Activated T-helper 1 cell treated with anti-CD3 and anti-CD28 coated beads, Interleukin-12 subunit alpha, Interleukin-12 subunit beta, Interleukin-2, Interleukin-4 antibody, amounts not matched to agents 30 ng/mL and 10 ng/mL and 1 ng/mL, durations not matched to agents 14 hours and 24 hours and 36 hours (primary cell): ENCODE measurements at regions of chr5 and their contacts with region 1.

Region 1: GRCh38 chr5:32444431-32445286 is at the start of gene ZFR:
- DNase-seq: peak; percentile 94
- H3K4me3 Mint-ChIP-seq: peak within 1 kb of the TSS; percentile 97
- H3K27ac Mint-ChIP-seq: peak within 1 kb of the TSS; percentile 98
- H3K4me1 Mint-ChIP-seq: peaks cover 29% of the 10 kb centered on the region
- H3K27me3 Mint-ChIP-seq: peaks cover 12% of the 10 kb centered on the region
- total RNA-seq, gene ZFR: 67.7 and 70.8 TPM in 2 replicates

Region 2: DNA sequence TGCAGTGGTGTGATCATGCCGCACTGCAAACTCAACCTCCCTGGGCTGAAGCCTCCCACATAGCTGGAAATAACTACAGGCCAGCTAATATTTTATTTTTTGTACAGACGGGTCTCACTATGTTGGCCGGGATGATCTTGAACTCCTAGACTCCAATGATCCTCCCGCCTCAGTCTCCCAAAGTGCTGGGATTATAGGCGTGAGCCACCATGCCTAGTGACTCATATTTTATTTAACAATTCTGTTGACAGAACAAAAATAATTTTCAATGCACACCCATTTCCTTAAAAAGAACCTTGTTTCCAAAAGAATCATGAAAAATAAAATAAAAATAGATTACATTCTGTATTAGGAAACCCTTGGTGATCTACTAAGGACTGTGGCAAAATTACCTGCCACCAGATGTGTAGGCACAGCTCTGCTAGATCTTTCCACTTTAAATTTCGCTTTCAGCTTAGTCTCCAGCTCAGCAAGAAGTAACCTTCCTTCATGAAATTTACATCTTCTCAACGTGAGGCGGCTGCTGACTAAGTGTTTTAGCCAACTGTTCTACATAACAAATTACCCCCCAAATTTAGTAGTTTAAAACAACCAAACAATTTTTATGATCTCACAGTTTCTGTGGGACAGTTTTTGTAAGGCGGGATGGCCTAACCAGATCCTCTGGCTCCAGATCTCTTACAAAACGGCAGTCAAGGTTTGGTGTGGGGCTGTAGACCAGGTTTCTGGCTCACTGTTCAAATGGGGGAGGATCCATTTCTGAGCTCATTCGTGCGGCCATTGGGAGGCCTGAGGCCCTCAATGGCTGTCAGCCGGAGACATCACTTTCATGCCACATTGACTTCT is 237.9 kb before region 1 on chr5:
- intact Hi-C with region 1: loop called (anchors 2 kb)
- DNase-seq: no peak
- H3K4me3 Mint-ChIP-seq: no peak overlapping the region
- H3K27ac Mint-ChIP-seq: no peak overlapping the region
- H3K4me1 Mint-ChIP-seq: peaks cover 23% of the 10 kb centered on the region
- H3K27me3 Mint-ChIP-seq: peaks cover 2% of the 10 kb centered on the region

Region 3: DNA sequence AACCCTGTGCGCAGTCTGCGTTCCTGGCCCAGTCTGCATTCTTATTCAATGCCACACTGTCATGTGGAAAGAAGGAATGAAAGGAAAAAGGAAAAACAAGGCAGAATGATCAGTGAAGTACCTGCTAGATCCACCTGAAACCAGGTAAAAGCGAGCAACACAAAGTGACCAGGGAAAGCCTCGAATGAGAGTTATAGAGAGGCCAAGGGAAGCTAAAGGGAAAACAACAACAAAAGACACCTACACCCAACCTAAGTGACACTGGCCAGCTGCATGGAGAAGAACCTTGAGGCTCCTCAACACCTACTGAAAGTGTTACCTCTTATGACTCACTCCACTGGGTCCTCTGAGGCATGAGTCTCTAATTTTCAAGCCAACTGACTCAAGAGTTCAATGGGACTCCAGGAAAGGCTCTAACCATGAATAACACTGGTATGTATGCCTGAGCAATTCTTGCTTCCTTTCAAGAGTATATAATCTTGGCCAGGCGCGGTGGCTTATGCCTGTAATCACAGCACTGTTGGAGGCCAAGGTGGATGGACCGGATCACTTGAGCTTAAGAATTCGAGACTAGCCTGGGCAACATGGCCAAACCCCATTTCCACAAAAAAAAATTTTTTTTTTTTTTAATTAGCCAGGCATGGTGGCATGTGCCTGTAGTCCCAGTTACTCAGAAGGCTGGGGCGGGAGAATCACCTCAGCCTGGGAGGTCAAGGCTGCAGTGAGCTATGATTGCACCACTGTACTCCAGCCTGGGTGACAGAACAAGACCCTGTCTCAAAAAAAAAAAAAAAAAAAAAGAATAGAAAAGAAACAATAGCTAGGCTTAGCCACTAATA is 160.9 kb before region 1 on chr5:
- intact Hi-C with region 1: loop called (anchors 5 kb)
- DNase-seq: no peak
- H3K4me3 Mint-ChIP-seq: no peak overlapping the region
- H3K27ac Mint-ChIP-seq: peak overlapping the region; percentile 53
- H3K4me1 Mint-ChIP-seq: peaks cover 54% of the 10 kb centered on the region
- H3K27me3 Mint-ChIP-seq: no peaks in the 10 kb centered on the region

Region 4: GRCh38 chr5:32388432-32389129 is 56.1 kb before region 1 on chr5:
- intact Hi-C with region 1: loop called (anchors 1 kb)
- DNase-seq: no peak
- H3K4me3 Mint-ChIP-seq: peak overlapping the region; percentile 9
- H3K27ac Mint-ChIP-seq: peak overlapping the region; percentile 93
- H3K4me1 Mint-ChIP-seq: peaks cover 22% of the 10 kb centered on the region
- H3K27me3 Mint-ChIP-seq: no peaks in the 10 kb centered on the region

Region 5: DNA sequence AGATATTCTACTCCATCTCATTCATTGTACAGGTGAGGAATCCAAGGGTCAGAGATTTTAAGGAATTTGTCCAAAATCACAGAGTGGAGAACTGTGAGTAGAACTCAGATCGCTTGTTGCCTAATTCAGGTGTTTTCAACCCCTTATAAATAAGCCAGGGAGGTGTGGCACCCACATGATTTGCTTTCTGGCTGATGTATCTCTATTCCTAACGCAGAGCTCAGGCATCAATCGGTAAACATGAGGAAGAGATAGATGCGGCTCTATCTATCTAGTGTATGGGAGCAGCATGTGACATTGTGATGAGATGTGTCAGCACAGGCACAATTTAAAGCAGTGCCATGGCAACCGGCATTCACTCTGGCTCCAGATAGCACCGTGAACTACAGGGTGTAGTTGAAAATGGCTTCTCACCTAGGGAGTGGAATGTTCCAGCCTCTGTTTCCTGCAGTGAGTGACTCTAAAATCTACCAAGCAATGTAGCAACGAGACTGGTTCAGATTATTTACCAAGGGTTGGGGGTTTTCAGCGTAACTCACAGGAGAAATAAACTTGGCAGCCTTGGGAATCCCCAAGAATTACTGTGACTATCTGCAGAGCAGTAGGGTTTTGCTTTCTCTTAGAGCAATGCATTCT is 87.3 kb after region 1 on chr5:
- intact Hi-C with region 1: loop called (anchors 1 kb)
- DNase-seq: peak; percentile 66
- H3K4me3 Mint-ChIP-seq: peak overlapping the region; percentile 91
- H3K27ac Mint-ChIP-seq: peak overlapping the region; percentile 98
- H3K4me1 Mint-ChIP-seq: peaks cover 62% of the 10 kb centered on the region
- H3K27me3 Mint-ChIP-seq: no peaks in the 10 kb centered on the region

Region 6: GRCh38 chr5:33299621-33300208 is 855.1 kb after region 1 on chr5:
- intact Hi-C with region 1: loop called (anchors 5 kb)
- DNase-seq: no peak
- H3K4me3 Mint-ChIP-seq: no peak overlapping the region
- H3K27ac Mint-ChIP-seq: peak overlapping the region; percentile 24
- H3K4me1 Mint-ChIP-seq: peaks cover 9% of the 10 kb centered on the region
- H3K27me3 Mint-ChIP-seq: peaks cover 3% of the 10 kb centered on the region